H1 (cell line): ENCODE measurements at regions of chr5 and their contacts with region 1.

Region 1: DNA sequence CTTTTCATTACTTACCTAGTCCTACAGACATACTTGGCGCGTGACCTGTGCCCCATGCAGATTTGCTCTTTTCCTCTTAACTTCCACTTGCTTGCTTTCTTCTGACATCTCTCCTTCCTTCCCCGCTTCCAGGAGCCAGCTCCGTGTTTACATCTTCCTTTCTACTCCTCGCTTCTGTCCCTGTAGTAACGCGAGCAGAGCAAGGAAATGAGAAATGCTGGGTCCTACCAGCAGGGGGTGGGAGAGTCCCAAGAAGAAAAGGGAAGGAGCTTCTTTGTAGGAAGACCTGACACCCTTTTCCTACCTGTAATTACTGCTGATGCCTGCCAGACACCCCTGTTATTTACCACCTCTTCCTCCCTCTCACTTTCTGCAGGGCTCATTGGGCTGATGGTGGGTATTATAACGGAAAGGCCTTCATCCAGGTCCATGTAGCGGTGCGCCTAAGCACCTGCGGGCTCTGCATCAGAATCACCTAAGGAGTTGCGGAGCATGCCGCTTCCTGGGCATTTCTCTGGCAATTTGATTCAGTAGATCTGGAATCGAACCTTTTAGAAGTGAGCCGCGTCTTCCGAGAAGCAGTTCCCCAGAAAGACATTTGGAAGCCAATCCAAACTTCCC is 1260.8 kb upstream of the WWC1 start:
- DNase-seq: peak; percentile 64 to 88
- H3K4me3 ChIP-seq: no peak overlapping the region
- H3K27ac ChIP-seq: no peak overlapping the region
- H3K4me1 ChIP-seq: no peaks in the 10 kb centered on the region
- H3K27me3 ChIP-seq: no peaks in the 10 kb centered on the region
- CTCF ChIP-seq: peak; percentile 39 to 88 (median 70)
- EP300 ChIP-seq: no peak
- POLR2A ChIP-seq: no peak
- RAD21 ChIP-seq: peak; percentile 82 to 83

Region 2: DNA sequence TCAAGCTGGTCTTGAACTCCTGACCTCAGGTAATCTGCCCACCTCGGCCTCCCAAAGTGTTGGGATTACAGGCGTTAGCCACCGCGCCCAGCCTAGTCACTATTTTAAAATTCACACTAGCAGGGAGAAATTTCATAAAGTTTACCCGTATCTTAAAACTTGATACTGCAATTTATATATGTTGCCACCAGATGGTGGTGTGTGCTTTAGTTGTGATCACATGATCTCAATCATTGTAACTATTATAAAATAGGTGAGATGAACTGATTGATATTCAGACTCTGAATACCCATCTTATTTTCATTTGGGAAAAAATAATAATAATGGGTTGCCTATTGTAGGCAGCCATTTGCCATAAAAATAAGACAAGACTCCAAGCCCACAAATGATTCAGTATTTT is 69.6 kb before region 1 on chr5:
- CTCF ChIA-PET with region 1: interaction called, 17 read pairs
- POLR2A ChIA-PET with region 1: no interaction called
- DNase-seq: no peak
- H3K4me3 ChIP-seq: no peak overlapping the region
- H3K27ac ChIP-seq: no peak overlapping the region
- H3K4me1 ChIP-seq: peaks cover 0 to 3% (median 0%) of the 10 kb centered on the region in 4 experiments; a peak in 1 of 7 replicates
- H3K27me3 ChIP-seq: no peaks in the 10 kb centered on the region
- CTCF ChIP-seq: peak in 2 of 3 experiments; percentile 9 to 32; a peak in 2 of 4 replicates
- EP300 ChIP-seq: no peak
- POLR2A ChIP-seq: no peak
- RAD21 ChIP-seq: peak; percentile 55 to 62

Region 3: GRCh38 chr5:167020418-167020817 is 10.2 kb before region 1 on chr5:
- CTCF ChIA-PET with region 1: interaction called, 12 read pairs
- POLR2A ChIA-PET with region 1: no interaction called
- DNase-seq: no peak
- H3K4me3 ChIP-seq: no peak overlapping the region
- H3K27ac ChIP-seq: no peak overlapping the region
- H3K4me1 ChIP-seq: no peaks in the 10 kb centered on the region
- H3K27me3 ChIP-seq: no peaks in the 10 kb centered on the region
- CTCF ChIP-seq: no peak
- EP300 ChIP-seq: no peak
- POLR2A ChIP-seq: no peak
- RAD21 ChIP-seq: no peak

Region 4: GRCh38 chr5:167244583-167244982 is 214.0 kb after region 1 on chr5:
- CTCF ChIA-PET with region 1: interaction called, 11 read pairs
- POLR2A ChIA-PET with region 1: no interaction called
- DNase-seq: peak; percentile 34 to 65
- H3K4me3 ChIP-seq: no peak overlapping the region
- H3K27ac ChIP-seq: no peak overlapping the region
- H3K4me1 ChIP-seq: no peaks in the 10 kb centered on the region; a peak in 1 of 7 replicates
- H3K27me3 ChIP-seq: no peaks in the 10 kb centered on the region
- CTCF ChIP-seq: peak; percentile 52 to 81 (median 75)
- EP300 ChIP-seq: no peak
- POLR2A ChIP-seq: no peak
- RAD21 ChIP-seq: peak; percentile 94 to 95